AG04450 (cell line): ENCODE measurements at regions of chr3 and their contacts with region 1.

Region 1: DNA sequence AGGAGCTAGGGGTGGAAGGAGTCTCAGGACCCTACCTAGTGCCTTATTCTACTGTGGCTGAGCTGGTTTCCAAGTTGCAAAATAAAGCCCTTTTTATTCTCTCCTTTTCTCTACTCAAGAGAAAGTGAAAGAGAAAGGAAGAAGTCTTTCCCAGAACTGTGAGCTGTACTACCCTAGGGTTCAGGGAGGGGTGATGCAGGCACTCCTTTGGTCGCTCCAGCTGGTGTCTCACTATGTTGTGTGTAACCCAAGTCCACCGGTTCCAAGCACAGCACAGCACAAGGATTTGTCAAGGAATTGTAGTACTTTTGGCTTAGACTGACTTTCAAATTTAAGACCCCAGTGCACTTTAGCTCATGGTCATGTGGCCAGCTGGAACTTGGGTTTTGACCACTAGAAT is 1721.7 kb downstream of the OTOL1 start:
- DNase-seq: no peak
- H3K4me3 ChIP-seq: no peak overlapping the region
- H3K27ac ChIP-seq: no peak overlapping the region
- H3K27me3 ChIP-seq: no peaks in the 10 kb centered on the region
- CTCF ChIP-seq: no peak

Region 2: DNA sequence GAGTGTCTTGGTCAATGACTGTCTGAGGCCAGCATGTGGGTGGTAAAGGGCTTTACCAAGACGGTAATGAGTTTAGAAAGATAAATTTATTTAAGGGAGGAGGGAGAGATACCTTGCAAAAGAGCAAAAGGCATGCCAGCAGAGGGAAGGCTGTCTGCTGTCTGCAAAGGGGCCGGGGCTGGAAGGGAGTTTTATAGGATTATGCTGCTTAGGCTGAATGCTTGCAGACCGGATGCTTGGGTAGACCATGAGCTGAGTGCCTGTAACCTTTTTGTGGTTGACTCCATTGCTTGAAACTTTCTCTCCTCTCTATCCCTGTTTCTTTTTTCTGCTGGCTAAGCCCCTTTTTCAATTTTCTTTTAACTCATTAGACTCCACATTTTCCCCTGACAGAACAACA is 178.7 kb before region 1 on chr3:
- CTCF ChIA-PET with region 1: interaction called, 20 read pairs
- POLR2A ChIA-PET with region 1: no interaction called
- DNase-seq: no peak
- H3K4me3 ChIP-seq: no peak overlapping the region
- H3K27ac ChIP-seq: no peak overlapping the region
- H3K27me3 ChIP-seq: no peaks in the 10 kb centered on the region
- CTCF ChIP-seq: no peak